Calu3 (cell line): ENCODE measurements at regions of chr11 and their contacts with region 1.

Region 1: DNA sequence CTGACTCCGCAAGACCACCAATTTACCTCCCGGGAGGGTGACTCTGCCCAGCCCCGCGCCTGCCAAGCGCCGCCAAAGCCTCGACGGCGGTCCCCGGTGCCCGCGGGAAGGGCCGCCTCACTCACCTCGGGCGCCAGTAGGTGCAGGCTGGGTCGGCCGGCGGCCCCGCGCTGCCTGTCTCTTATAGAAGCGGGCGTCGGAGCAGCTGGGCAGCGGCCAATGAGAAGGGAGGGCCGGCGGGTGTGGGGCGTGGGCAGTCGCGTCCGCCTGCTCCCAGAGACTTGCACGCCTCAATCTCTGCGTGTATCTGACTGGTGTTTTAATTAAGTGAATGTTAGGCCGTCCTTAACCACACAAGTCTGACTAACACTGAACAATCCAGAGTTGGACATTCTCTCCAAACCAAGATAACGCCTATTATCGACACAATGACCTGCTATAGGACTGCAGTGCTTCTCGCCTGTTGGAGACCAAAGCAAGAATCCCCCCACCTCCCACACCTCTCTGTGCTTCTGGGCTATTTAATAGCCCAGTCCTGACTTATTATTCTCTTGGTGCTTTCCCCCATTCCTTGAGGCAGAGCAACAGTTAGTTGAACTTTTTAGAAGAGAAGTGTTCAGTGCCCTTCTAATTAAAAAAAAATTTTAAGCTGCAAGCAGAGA is at the start of gene TPH1:
- DNase-seq: peak; percentile 48
- H3K4me3 Mint-ChIP-seq: peak within 1 kb of the TSS; percentile 27
- H3K27ac Mint-ChIP-seq: no peak within 1 kb of the TSS
- H3K4me1 Mint-ChIP-seq: no peaks in the 10 kb centered on the region
- H3K27me3 Mint-ChIP-seq: peaks cover 73% of the 10 kb centered on the region
- CTCF ChIP-seq: no peak
- total RNA-seq, gene TPH1: 0.24 and 0.34 TPM in 2 replicates

Region 2: DNA sequence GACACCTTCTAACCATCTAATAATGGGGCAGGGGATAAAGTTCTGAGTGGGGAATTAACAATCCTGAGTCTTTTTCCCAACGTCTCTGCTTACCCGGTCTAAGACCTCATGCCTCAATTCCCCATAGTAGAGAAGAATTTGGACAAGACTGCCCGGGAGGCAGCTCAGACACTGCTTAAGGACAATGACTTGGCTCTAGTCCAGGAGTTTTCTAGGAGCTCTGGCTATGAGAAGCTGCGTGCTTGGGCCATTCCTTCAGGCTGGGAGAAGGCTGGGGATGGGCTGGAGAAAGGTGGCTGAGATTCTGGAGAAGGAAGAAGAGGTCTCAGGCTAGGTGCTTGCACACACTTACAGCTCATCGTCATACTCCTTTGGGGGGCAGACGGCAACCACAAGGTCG is 549.8 kb before region 1 on chr11:
- CTCF ChIA-PET with region 1: interaction called, 12 read pairs
- intact Hi-C with region 1: no loop called
- DNase-seq: no peak
- H3K4me3 Mint-ChIP-seq: no peak overlapping the region
- H3K27ac Mint-ChIP-seq: no peak overlapping the region
- H3K4me1 Mint-ChIP-seq: no peaks in the 10 kb centered on the region
- H3K27me3 Mint-ChIP-seq: peaks cover 10% of the 10 kb centered on the region
- CTCF ChIP-seq: no peak